Mammary epithelial cell (primary cell): ENCODE measurements at regions of chr13 and their contacts with region 1.

Region 1: GRCh38 chr13:37869756-37870488 is at the start of gene TRPC4:
- DNase-seq: peak; percentile 58
- H3K4me3 ChIP-seq: peak within 1 kb of the TSS; percentile 34 to 50 (median 48)
- H3K27ac ChIP-seq: no peak within 1 kb of the TSS
- H3K4me1 ChIP-seq: peaks cover 21% of the 10 kb centered on the region
- H3K27me3 ChIP-seq: peaks cover 16% of the 10 kb centered on the region
- CTCF ChIP-seq: peak; percentile 58 to 86
- total RNA-seq, gene TRPC4: not detected

Region 2: GRCh38 chr13:37934339-37935191 is 64.6 kb after region 1 on chr13:
- CTCF ChIA-PET with region 1: no interaction called
- dilution Hi-C with region 1: no loop called
- in situ Hi-C with region 1: no loop called
- intact Hi-C with region 1: no loop called
- DNase-seq: no peak
- H3K4me3 ChIP-seq: no peak overlapping the region
- H3K27ac ChIP-seq: no peak overlapping the region
- H3K4me1 ChIP-seq: no peaks in the 10 kb centered on the region
- H3K27me3 ChIP-seq: peaks cover 3% of the 10 kb centered on the region
- CTCF ChIP-seq: no peak

Region 3: DNA sequence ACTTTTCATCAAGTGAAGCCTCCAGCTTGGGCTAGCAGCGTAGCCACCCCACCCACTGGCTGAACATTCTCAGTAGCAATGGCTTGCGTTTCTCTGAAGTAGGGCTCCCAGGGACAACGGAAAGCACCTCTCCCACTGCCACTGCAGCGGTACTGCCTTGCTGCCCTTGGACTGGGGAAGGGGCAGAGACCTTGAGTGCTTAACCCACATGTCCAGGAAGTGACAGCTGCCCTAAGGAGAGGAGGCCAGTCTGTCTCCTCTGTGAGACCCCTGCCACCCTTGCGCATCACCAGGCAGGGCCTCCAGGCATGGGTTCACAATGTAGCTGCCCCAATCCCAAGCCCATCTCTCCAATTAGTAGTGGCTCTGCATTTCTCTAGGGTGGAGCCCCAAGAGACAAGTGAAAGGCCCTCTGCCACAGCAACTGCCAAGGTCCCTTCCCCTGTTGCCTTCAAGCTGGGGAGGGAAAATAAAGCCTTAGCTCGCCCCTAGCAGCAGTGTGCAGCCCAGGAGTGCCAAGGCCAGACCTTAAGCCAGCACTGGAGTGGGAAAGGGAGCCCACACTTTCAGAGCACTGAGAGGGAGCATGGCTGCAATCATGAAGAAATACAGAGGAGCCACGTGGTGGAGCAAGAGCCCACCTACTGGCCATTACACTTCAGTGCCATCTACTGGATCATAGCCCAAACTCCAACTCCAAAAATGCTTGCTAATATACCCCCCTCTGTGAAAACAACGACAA is 175.6 kb after region 1 on chr13:
- CTCF ChIA-PET with region 1: no interaction called
- dilution Hi-C with region 1: no loop called
- in situ Hi-C with region 1: no loop called
- intact Hi-C with region 1: loop called (anchors 1 kb)
- DNase-seq: peak; percentile 27
- H3K4me3 ChIP-seq: no peak overlapping the region
- H3K27ac ChIP-seq: no peak overlapping the region
- H3K4me1 ChIP-seq: no peaks in the 10 kb centered on the region
- H3K27me3 ChIP-seq: no peaks in the 10 kb centered on the region
- CTCF ChIP-seq: peak; percentile 56 to 71

Region 4: DNA sequence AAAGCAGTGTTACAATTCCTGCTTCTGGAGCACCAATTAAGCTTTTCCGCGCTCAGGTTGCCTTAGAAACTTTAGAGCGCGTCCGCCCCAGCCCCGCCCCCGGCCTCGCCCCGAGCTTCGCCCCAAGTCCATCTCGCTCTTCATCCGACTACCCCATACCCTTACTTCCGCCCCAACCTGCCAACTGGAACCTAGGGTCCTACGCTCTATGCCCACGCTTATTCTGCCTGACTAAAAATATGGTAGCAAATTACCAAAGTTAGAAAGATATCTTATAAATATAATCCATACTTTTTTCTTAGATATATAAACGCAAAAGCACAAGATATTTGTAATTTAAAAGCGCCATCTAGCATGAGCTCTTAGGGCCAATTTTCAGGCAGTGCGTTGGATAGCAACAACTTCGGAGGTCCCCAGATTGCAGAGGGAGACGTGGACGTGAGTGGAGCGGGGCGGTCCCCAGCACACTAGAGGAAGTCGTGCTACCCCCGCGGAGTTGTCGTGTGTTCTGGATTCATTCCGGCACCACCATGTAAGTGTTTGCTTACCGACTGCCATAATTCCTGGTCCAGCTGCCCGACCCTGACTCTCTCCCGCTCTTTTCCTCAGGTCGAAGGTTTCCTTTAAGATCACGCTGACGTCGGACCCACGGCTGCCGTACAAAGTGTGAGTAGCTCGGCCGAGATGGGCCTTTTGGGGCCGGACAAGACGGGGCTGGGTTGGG is 479.6 kb after region 1 on chr13 and contains the start of gene UFM1:
- CTCF ChIA-PET with region 1: interaction called, 6 read pairs
- dilution Hi-C with region 1: no loop called
- in situ Hi-C with region 1: no loop called
- intact Hi-C with region 1: loop called (anchors 2 kb)
- DNase-seq: peak; percentile 90
- H3K4me3 ChIP-seq: peak within 1 kb of the TSS; percentile 68 to 90 (median 74)
- H3K27ac ChIP-seq: peak within 1 kb of the TSS; percentile 98
- H3K4me1 ChIP-seq: peaks cover 21% of the 10 kb centered on the region
- H3K27me3 ChIP-seq: no peaks in the 10 kb centered on the region
- CTCF ChIP-seq: no peak
- total RNA-seq, gene UFM1: 67.4 to 97.5 TPM

Region 5: GRCh38 chr13:38530492-38530891 is 660.6 kb after region 1 on chr13:
- CTCF ChIA-PET with region 1: interaction called, 5 read pairs
- dilution Hi-C with region 1: no loop called
- in situ Hi-C with region 1: no loop called
- intact Hi-C with region 1: loop called (anchors 1 kb)
- DNase-seq: peak; percentile 5
- H3K4me3 ChIP-seq: no peak overlapping the region
- H3K27ac ChIP-seq: no peak overlapping the region
- H3K4me1 ChIP-seq: no peaks in the 10 kb centered on the region
- H3K27me3 ChIP-seq: peaks cover 3% of the 10 kb centered on the region
- CTCF ChIP-seq: peak; percentile 47 to 54